ENCODE measurements at regions of chr2 and their contacts with region 1.

Region 1: GRCh38 chr2:121400201-121400600 is 115.2 kb upstream of the TFCP2L1 start:
- DNase-seq: peak; percentile 31
- H3K4me3 ChIP-seq: no peak overlapping the region
- CTCF ChIP-seq: no peak

Region 2: DNA sequence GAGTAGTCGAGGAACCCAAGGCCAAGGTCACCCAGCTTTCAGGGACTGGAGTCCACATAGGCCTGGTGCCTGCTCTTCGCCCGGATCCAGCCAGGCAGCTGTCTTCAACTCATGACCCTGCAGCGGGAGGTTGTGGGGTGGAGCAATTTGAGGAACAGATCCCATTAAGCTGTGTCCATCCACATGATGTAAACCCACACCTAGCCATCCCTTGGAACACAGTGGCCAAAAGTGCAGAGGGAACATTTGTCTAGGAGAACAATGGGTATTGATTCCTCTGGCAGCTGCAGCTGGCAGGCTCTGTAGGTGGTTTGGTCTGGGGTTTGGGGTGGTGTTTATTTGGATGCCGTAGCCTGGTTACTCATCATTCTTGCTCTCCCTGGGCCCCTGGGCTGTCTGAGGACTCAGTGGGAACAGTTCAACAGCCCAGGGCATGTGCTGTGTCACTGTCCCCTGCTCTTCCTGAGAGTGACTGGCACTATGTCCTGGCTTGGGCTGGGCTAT is 214.6 kb before region 1 on chr2:
- CTCF ChIA-PET with region 1: no interaction called
- POLR2A ChIA-PET with region 1: no interaction called
- DNase-seq: no peak
- H3K4me3 ChIP-seq: no peak overlapping the region
- CTCF ChIP-seq: no peak

Region 3: DNA sequence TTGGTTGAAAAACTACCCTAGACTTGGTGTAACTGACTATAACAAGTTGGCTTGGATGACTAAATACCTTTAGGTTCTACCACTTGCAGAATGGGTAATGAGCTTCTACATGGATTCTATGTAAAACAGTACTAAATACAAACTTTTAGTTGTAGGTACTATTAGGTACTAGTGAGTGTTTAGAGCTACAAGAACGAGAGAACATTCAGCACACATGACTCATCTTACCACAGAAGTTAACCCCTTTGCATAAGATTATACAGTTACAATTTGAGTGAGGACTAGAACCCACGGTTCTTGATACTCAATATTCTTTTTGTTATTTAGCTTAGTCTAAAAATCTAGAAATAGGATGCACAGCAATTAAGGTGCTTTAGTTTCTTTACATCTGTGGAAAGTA is 13.5 kb before region 1 on chr2:
- CTCF ChIA-PET with region 1: interaction called, 17 read pairs
- POLR2A ChIA-PET with region 1: no interaction called
- DNase-seq: no peak
- H3K4me3 ChIP-seq: no peak overlapping the region
- CTCF ChIP-seq: no peak

Region 4: GRCh38 chr2:121412349-121412748 is 12.1 kb after region 1 on chr2:
- CTCF ChIA-PET with region 1: interaction called, 37 read pairs
- POLR2A ChIA-PET with region 1: no interaction called
- DNase-seq: no peak
- H3K4me3 ChIP-seq: no peak overlapping the region
- CTCF ChIP-seq: no peak

Region 5: DNA sequence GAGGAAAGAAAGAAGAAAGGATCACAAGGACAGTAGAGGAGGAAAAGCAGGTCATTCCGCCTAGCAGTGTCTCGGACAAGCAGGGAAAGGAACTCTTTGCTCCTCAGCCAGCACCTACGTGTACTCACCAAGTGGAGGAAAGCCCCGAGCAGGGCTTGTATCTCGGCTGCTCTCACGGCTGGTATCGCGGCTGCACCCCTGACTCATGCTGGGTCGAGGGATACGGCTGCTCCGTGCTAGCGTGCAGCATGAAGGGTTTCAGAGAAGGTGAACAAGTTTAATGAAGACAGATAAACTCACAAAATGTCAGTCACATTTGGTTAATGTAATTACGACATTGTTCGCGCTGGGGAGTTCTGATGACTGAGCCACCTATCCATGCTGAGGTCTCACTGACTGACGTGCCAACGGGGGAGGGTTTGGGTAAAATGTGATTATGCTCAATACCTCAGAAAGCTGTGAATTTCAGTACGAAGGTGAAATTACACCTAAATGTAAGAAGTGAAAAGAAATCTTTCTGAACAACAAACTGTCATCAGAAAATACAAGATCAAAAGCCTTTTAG is 18.4 kb after region 1 on chr2:
- CTCF ChIA-PET with region 1: interaction called, 11 read pairs
- POLR2A ChIA-PET with region 1: no interaction called
- DNase-seq: no peak
- H3K4me3 ChIP-seq: no peak overlapping the region
- CTCF ChIP-seq: no peak

Region 6: GRCh38 chr2:121429119-121429903 is 29.1 kb after region 1 on chr2:
- CTCF ChIA-PET with region 1: interaction called, 10 read pairs
- POLR2A ChIA-PET with region 1: no interaction called
- DNase-seq: no peak
- H3K4me3 ChIP-seq: no peak overlapping the region
- CTCF ChIP-seq: no peak

Region 7: GRCh38 chr2:121722479-121722878 is 322.3 kb after region 1 on chr2:
- CTCF ChIA-PET with region 1: interaction called, 14 read pairs
- POLR2A ChIA-PET with region 1: no interaction called
- DNase-seq: peak; percentile 40
- H3K4me3 ChIP-seq: no peak overlapping the region; the same call in 1 of the 2 replicates
- CTCF ChIP-seq: no peak

Region 8: DNA sequence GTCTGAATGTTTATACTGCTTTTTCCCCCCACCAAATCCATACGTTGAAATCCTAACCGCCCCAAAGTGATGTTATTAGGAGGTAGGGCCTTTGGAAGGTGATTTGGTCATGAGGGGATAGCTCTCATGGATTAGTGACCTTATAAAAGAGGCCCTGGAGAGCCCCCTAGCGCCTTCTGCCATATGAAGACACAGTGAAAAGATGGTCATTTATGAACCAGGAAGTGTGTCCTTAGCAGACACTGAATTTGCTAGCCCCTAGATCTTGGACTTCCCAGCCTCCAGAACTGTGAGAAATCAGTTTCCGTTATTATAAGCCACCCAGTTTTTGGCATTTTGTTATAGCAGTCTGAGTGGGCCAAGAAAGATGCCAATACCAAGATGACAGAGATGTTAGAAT is 348.0 kb after region 1 on chr2:
- CTCF ChIA-PET with region 1: interaction called, 11 read pairs
- POLR2A ChIA-PET with region 1: no interaction called
- DNase-seq: no peak
- H3K4me3 ChIP-seq: no peak overlapping the region
- CTCF ChIP-seq: peak; percentile 3